Thyroid gland (tissue), 4 donors: ENCODE measurements at regions of chr1 and their contacts with region 1.

Region 1: GRCh38 chr1:37434292-37434907 is 40.0 kb upstream of the ZC3H12A start:
- DNase-seq: peak; percentile 56
- H3K4me3 ChIP-seq: no peak overlapping the region
- H3K27ac ChIP-seq: no peak overlapping the region
- H3K4me1 ChIP-seq: no peaks in the 10 kb centered on the region
- H3K27me3 ChIP-seq: no peaks in the 10 kb centered on the region
- CTCF ChIP-seq: peak; percentile 70 to 90 (median 78)
- POLR2A ChIP-seq: no peak

Region 2: GRCh38 chr1:36705629-36706028 is 728.8 kb before region 1 on chr1:
- intact Hi-C with region 1: loop called (anchors 5 kb)
- DNase-seq: no peak
- H3K4me3 ChIP-seq: no peak overlapping the region
- H3K27ac ChIP-seq: no peak overlapping the region
- H3K4me1 ChIP-seq: no peaks in the 10 kb centered on the region
- H3K27me3 ChIP-seq: no peaks in the 10 kb centered on the region
- CTCF ChIP-seq: no peak
- POLR2A ChIP-seq: no peak

Region 3: GRCh38 chr1:37282764-37283163 is 151.6 kb before region 1 on chr1:
- intact Hi-C with region 1: no loop called
- DNase-seq: no peak
- H3K4me3 ChIP-seq: no peak overlapping the region
- H3K27ac ChIP-seq: no peak overlapping the region
- H3K4me1 ChIP-seq: no peaks in the 10 kb centered on the region
- H3K27me3 ChIP-seq: no peaks in the 10 kb centered on the region
- CTCF ChIP-seq: no peak
- POLR2A ChIP-seq: no peak

Region 4: GRCh38 chr1:37795321-37796125 is 361.1 kb after region 1 on chr1:
- intact Hi-C with region 1: no loop called
- DNase-seq: peak; percentile 46 to 55
- H3K4me3 ChIP-seq: no peak overlapping the region
- H3K27ac ChIP-seq: no peak overlapping the region
- H3K4me1 ChIP-seq: peaks cover 11 to 18% of the 10 kb centered on the region in 2 donors
- H3K27me3 ChIP-seq: no peaks in the 10 kb centered on the region
- CTCF ChIP-seq: no peak
- POLR2A ChIP-seq: no peak

Region 5: DNA sequence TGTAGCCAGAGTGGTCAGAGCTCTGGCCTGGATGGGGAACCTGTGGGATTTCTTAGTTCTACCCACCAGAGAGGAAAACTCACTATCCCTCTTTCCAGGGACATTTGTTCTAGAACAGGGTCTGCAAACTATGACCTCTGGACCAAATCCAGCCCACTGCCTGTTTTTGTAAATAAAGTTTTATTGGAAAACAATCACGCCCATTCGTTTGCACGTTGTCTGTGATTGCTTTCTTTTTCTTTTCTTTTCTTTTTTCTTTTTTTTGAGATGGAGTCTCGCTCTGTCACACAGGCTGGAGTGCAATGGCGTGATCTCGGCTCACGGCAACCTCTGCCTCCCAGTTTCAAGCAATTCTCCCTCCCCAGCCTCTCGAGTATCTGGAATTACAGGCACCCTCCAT is 728.5 kb after region 1 on chr1:
- intact Hi-C with region 1: no loop called
- DNase-seq: no peak
- H3K4me3 ChIP-seq: no peak overlapping the region
- H3K27ac ChIP-seq: no peak overlapping the region
- H3K4me1 ChIP-seq: no peaks in the 10 kb centered on the region
- H3K27me3 ChIP-seq: no peaks in the 10 kb centered on the region
- CTCF ChIP-seq: no peak
- POLR2A ChIP-seq: no peak